Right ventricle myocardium inferior (tissue), 1 donor: ENCODE measurements at regions of chr2 and their contacts with region 1.

Region 1: GRCh38 chr2:233251306-233252116 is at the start of gene ATG16L1:
- DNase-seq: peak; percentile 99
- ATAC-seq: peak; percentile 100
- total RNA-seq, gene ATG16L1: 15.4 TPM

Region 2: DNA sequence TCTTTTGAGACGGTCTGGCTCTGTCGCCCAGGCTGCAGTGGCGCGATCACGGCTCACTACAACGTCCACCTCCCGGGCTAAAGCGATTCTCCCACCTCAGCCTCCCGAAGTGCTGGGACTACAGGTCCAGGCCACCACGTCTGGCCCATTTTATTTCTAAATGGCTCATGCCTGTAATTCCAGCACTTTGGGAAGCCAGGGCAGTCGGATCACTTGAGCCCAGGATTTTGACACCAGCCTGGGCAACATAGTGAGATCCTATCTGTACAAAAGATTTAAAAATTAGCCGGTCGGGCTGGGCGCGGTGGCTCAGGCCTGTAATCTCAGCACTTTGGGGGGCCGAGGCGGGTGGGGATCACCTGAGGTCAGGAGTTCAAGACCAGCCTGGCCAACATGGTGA is 644.5 kb before region 1 on chr2:
- intact Hi-C with region 1: loop called (anchors 2 kb)
- DNase-seq: no peak
- ATAC-seq: no peak

Region 3: DNA sequence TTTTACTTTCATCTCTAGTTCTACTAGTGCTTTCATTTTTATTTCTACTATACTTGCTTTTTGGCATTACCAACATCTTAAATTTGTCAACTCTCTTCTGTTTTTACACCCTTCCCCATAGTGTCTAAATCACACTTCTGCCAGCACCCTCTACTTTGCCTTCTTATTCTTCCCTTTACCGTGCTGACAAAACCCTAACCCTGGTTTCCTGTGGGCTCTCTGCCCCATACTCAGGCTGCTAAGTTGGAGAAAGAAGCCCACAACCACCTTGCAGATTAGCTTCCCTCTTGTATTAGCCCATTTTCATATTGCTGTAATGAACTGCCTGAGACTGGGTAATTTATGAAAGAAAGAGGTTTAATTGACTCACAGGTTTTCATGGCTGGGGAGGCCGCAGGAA is 529.6 kb before region 1 on chr2:
- intact Hi-C with region 1: no loop called
- DNase-seq: no peak
- ATAC-seq: no peak

Region 4: DNA sequence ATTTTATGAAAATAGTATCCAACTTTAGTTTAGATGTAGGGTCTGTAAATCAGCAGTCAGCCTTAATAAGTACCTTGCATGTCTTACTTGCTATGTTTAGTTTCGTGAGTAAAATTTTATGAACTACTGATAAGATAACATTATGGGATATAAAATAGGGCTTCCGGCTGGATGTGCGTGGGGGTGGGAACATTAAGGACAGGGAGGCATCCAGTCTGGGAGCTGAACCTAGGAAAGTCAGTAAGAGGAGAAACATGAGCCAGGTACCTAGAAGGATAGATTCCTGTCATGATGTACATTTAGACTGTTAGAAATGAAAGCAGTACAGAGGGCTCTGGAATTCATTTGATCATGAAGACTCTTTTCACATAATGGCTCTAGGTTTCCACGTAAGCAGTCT is 462.4 kb before region 1 on chr2:
- intact Hi-C with region 1: no loop called
- DNase-seq: no peak
- ATAC-seq: no peak

Region 5: DNA sequence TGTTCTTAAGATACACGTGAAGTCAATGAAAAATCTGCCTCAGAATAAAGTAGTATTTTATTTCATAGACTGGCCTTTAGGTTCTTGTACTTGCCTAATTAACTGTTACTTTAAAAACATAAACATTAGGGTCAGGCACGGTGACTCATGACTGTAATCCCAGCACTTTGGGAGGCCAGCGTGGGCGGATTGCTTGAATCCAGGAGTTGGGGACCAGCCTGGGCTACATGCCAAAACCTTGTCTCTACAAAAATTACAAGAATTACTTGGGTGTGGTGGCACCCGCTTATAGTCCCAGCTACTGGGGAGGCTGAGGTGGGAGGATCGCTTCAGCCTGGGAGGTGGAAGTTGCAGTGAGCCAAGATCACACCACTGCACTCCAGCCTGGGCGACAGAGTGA is 397.4 kb before region 1 on chr2:
- intact Hi-C with region 1: loop called (anchors 2 kb)
- DNase-seq: no peak
- ATAC-seq: no peak

Region 6: DNA sequence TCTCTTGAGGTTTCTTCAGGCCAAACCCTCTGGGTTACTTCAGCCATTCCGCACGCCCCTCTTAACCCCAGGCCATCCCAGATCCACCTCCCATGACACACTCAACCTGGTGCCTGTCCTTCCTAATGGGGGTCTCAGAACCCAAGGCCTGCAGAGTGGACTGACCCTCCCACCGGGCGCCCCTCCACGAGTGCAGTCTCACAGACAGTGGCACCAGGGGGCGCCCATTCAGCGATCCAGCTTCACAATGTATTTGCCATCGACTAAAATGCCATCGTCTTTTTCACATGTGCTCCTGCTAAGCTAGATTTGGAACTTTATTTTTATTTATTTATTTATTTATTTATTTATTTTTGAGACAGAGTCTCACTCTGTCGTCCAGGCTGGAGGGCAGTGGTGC is 152.9 kb before region 1 on chr2:
- intact Hi-C with region 1: loop called (anchors 1 kb)
- DNase-seq: no peak
- ATAC-seq: no peak